Right ventricle myocardium superior (tissue), 1 donor: ENCODE measurements at regions of chr4 and their contacts with region 1.

Region 1: DNA sequence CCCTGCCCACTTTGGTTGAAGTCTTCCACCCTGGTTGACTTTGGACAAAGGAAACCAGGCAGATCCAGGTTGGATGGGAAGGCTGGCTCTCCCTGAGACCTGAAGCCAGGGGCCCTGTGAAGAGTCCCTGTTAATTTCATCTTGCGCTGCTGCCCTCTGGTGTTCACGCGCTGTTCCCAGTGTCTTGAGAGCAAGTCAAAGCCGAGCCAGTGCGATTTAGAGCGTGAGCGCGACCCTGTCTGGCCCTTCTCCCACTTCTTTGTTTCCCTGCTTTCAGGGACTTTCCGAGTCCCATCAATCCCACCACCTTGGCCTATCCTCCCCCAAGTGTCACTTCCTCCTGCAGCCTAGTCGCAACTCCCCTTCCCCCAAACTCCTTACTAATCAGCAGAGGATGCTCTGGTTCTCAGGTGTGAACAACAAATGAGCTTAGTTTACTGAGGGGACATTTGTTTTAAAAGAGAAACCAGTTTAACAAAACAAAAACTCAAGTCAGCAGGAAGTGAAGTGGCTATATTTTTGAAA is 25.8 kb upstream of the CHRNA9 start:
- DNase-seq: peak; percentile 94
- ATAC-seq: peak; percentile 91

Region 2: DNA sequence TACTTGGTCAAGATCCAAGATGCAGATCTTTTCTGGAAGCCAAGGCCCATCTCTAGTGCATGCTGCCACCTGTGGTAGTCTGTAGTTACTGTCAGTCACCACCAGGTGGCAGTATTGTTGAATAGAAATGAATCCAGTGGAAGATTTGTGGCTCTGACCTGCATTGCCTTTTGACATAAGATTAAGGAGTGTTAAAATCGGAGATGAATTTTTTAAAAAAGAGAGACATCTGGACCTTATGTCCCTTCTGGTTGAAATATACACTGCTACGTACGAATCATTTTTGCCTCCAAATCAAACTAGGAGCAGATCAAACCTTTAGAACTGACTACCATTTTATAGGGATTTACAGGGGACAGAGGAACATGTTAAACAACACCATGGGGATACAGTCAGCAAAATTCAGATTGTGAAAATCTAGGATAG is 159.3 kb before region 1 on chr4:
- intact Hi-C with region 1: loop called (anchors 2 kb)
- DNase-seq: no peak
- ATAC-seq: peak; percentile 68

Region 3: GRCh38 chr4:40238700-40239548 is 70.4 kb before region 1 on chr4:
- intact Hi-C with region 1: no loop called
- DNase-seq: peak; percentile 44
- ATAC-seq: no peak

Region 4: GRCh38 chr4:40264995-40265909 is 44.1 kb before region 1 on chr4:
- intact Hi-C with region 1: no loop called
- DNase-seq: peak; percentile 55
- ATAC-seq: peak; percentile 48

Region 5: GRCh38 chr4:40363382-40363920 is 54.1 kb after region 1 on chr4:
- intact Hi-C with region 1: no loop called
- DNase-seq: no peak
- ATAC-seq: no peak

Region 6: GRCh38 chr4:40613456-40613855 is 304.1 kb after region 1 on chr4:
- intact Hi-C with region 1: no loop called
- DNase-seq: no peak
- ATAC-seq: no peak